ENCODE measurements at regions of chr17 and their contacts with region 1.

Region 1: DNA sequence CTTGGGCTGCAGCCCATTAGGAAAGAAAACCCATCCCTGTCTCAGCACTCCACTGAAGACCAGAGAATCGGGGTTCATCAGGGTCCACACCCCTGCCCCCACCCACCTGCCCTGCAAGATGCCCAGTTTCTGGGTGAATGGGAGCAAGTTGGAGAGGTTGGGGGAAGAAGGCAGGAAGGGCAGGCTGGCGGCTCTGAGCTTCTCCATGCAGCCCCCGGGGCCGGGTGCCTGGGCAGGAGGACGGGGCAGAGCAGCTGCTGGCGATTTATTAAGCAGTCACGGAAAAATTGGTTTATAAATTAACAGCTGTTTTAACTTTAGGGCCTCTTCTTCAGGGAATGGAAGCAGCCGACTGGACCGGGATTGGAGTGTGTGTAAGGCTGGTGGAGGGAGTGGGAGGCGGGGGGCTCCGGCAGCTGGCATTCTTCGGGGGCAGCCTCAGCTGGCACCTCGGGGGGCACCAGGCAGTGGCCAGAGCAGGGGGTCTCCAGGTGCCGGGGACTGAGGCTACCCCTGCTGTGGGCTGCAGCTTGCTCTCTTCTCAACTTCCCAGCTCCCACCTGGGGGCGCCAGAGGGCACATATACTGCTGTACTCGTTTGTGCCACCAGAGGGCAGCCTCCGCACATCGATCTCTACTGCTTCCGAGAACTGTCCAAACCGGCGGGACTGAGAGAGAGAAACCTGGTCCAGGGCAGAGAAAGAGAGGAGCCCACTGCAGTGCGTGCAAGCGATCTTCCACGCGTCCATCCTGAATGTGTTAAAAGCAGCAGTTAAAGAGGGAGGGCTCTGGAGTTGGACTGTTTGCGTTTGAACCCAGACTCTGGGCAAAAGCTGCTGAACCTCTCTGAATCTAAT is 5.0 kb upstream of the PPP1R1B start:
- DNase-seq: peak; percentile 67 to 96 (median 89)
- ATAC-seq: peak; percentile 55 to 86 (median 74)
- H3K4me3 ChIP-seq: no peak overlapping the region
- H3K27ac ChIP-seq: no peak overlapping the region
- H3K4me1 ChIP-seq: peaks cover 0 to 8% (median 4%) of the 10 kb centered on the region in 3 donors
- H3K27me3 ChIP-seq: no peaks in the 10 kb centered on the region
- CTCF ChIP-seq: peak; percentile 98 to 99 (median 99)

Region 2: GRCh38 chr17:39547713-39548478 is 73.9 kb before region 1 on chr17:
- intact Hi-C with region 1: loop called in 2 of 3 experiments (anchors 2 to 5 kb)
- DNase-seq: peak in 5 of 6 donors; percentile 18 to 89 (median 64)
- ATAC-seq: peak; percentile 66 to 92 (median 82)
- H3K4me3 ChIP-seq: no peak overlapping the region
- H3K27ac ChIP-seq: no peak overlapping the region
- H3K4me1 ChIP-seq: no peaks in the 10 kb centered on the region
- H3K27me3 ChIP-seq: no peaks in the 10 kb centered on the region
- CTCF ChIP-seq: peak; percentile 90 to 91 (median 90)

Region 3: DNA sequence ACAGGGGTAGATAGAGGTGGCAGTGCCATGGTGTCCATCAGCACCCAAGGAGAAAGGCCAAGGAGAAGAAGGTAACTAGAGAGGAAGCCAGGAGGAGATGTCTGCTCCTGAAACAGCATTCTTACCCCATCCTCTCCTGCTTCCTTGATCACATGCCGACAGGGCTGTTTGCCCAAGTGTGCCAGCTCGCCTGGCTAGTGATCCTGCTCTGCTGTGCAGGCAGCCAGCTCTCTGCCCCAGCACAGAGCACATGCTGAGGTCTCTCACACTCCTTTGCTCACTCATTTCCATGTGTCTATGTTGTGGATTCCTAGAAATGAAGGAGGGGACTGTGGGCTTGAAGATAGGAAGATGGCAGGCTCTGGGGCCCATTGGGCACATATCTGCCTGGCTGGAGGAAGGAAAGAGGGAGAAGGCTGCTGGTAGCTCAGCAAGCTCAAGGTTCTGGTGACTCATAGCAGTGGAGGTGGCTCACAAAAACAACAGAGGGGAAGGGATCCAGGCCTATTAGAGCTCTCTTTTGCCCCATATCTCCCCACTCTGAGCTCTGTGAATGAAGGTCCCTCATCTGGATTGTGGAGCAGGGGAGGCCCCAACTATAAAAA is 68.3 kb before region 1 on chr17:
- intact Hi-C with region 1: loop called in 2 of 3 experiments (anchors 2 to 5 kb)
- DNase-seq: no peak
- ATAC-seq: no peak
- H3K4me3 ChIP-seq: no peak overlapping the region
- H3K27ac ChIP-seq: no peak overlapping the region
- H3K4me1 ChIP-seq: no peaks in the 10 kb centered on the region
- H3K27me3 ChIP-seq: no peaks in the 10 kb centered on the region
- CTCF ChIP-seq: no peak

Region 4: DNA sequence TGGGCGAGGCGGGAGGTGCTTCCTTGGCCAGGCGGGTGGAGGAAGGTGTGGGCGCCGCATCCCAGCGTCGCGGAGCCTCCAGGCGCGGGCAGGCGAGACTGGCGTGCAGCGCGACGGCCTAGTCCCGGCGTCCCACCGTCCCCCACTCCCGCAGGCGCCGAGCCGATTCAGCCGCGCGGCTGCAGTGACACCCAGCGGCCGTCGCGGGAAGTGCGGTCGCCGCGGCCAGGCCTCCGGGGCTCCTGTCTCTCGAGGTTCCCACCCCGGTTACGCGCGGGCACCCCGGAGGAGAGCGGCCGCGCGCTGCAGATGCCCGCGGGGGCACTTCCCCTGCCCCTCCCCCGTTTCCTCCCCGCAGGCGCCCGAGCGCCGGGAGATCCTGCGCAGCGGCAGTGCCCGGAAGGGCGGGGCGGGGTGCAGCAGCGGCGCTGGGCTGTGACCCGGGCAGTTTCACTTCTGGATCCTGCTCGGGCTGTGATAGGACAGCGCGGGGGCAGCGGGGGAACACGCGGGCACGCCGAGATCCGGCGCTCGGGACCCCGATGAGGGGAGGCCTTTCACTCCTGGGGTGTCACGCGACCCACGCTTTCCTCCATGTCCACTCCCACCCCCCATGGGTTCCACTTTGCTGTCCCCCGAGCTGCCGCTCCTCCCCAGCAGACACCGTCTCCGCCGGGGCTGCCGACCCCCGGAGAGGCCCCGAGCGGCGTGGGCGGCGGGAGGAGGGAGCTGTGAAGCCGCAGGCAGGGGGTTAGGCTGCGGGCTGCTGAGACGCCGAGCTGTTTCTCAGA is 132.6 kb after region 1 on chr17:
- intact Hi-C with region 1: loop called in 2 of 3 experiments (anchors 5 kb)
- DNase-seq: peak; percentile 90 to 96 (median 93)
- ATAC-seq: peak; percentile 79 to 91 (median 82)
- H3K4me3 ChIP-seq: peak overlapping the region; percentile 45 to 79 (median 58)
- H3K27ac ChIP-seq: peak overlapping the region; percentile 80 to 92 (median 86)
- H3K4me1 ChIP-seq: peaks cover 14 to 26% (median 23%) of the 10 kb centered on the region in 3 donors
- H3K27me3 ChIP-seq: no peaks in the 10 kb centered on the region
- CTCF ChIP-seq: peak; percentile 98 to 99 (median 98)

Measured in pancreas (tissue), 10 donors.